IMR-90 (cell line): ENCODE measurements at regions of chr5 and their contacts with region 1.

Region 1: GRCh38 chr5:135332519-135333150 is 66.4 kb downstream of the MACROH2A1 start:
- DNase-seq: peak; percentile 77
- ATAC-seq: peak; percentile 42
- H3K4me3 ChIP-seq: no peak overlapping the region
- H3K27ac ChIP-seq: no peak overlapping the region
- H3K4me1 ChIP-seq: peaks cover 31% of the 10 kb centered on the region
- H3K27me3 ChIP-seq: no peaks in the 10 kb centered on the region
- CTCF ChIP-seq: peak; percentile 69
- POLR2A ChIP-seq: no peak
- RAD21 ChIP-seq: peak; percentile 92

Region 2: DNA sequence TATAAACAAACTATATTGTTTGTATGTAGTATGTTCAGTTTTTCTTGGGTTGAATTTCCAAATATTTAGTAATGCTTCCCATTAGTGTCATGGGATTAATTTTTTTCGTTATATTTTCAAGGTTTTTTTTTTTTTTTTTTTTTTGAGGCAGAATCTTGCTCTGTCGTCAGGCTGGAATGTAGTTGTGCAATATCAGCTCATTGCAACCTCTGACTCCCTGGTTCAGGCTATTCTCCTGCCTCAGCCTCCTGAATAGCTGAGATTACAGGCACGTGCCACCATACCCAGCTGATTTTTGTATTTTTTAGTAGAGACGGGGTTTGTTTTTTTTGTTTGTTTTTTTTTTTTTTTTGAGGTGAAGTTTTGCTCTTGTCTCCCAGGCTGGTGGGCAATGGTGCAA is 563.4 kb before region 1 on chr5:
- CTCF ChIA-PET with region 1: no interaction called
- POLR2A ChIA-PET with region 1: interaction called, 19 read pairs
- dilution Hi-C with region 1: no loop called
- in situ Hi-C with region 1: no loop called
- intact Hi-C with region 1: no loop called
- DNase-seq: peak; percentile 70
- ATAC-seq: peak; percentile 60
- H3K4me3 ChIP-seq: no peak overlapping the region
- H3K27ac ChIP-seq: no peak overlapping the region
- H3K4me1 ChIP-seq: no peaks in the 10 kb centered on the region
- H3K27me3 ChIP-seq: no peaks in the 10 kb centered on the region
- CTCF ChIP-seq: no peak
- POLR2A ChIP-seq: no peak
- RAD21 ChIP-seq: no peak

Region 3: GRCh38 chr5:135013947-135014570 is 318.6 kb before region 1 on chr5:
- CTCF ChIA-PET with region 1: no interaction called
- POLR2A ChIA-PET with region 1: no interaction called
- dilution Hi-C with region 1: no loop called
- in situ Hi-C with region 1: loop called (anchors 10 kb)
- intact Hi-C with region 1: no loop called
- DNase-seq: peak; percentile 58
- ATAC-seq: peak; percentile 76
- H3K4me3 ChIP-seq: no peak overlapping the region
- H3K27ac ChIP-seq: no peak overlapping the region; the same call in 1 of the 2 replicates
- H3K4me1 ChIP-seq: peaks cover 7% of the 10 kb centered on the region; the same call in 1 of the 2 replicates
- H3K27me3 ChIP-seq: no peaks in the 10 kb centered on the region
- CTCF ChIP-seq: no peak
- POLR2A ChIP-seq: no peak
- RAD21 ChIP-seq: no peak

Region 4: DNA sequence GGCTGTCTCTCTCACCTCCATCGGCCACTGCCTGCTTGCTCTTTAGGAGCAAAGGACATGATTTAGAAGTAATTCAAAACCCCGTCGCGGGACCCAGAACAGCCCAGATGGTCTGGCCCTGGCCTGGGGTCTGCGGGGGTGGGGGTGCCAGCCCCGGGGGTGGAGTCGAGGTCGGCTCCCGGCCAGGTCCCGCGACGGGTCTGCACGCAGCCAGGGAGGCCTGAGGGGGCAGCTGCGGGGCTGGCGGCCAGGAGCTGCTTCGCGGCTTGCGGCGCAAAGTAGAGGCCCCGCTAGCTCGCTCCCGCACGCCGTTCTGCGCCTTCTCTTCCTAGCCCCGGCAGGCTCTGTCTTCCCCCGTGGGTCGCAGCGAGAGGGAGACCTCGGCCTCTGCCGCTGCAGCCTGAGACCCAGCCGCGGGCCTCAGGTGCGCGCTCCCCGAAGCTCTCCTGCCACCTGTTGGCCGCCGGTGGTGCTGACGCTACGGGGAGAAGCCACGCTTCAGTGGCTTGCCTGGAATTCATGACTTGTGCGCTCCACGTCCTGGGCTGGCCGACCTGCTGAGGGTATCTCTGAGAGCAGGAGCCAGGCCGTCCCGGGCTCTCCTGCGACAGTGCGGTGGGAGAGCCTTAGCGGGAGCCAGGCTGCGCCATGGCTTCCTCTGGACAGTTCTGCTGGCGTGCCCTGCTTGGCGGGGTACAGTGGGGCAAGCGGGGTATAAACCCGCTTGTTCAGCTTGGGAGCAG is 141.4 kb before region 1 on chr5:
- CTCF ChIA-PET with region 1: no interaction called
- POLR2A ChIA-PET with region 1: no interaction called
- dilution Hi-C with region 1: no loop called
- in situ Hi-C with region 1: loop called (anchors 5 kb)
- intact Hi-C with region 1: loop called (anchors 5 kb)
- DNase-seq: peak; percentile 68
- ATAC-seq: peak; percentile 77
- H3K4me3 ChIP-seq: no peak overlapping the region
- H3K27ac ChIP-seq: no peak overlapping the region
- H3K4me1 ChIP-seq: peaks cover 19% of the 10 kb centered on the region
- H3K27me3 ChIP-seq: no peaks in the 10 kb centered on the region
- CTCF ChIP-seq: peak; percentile 89
- POLR2A ChIP-seq: no peak
- RAD21 ChIP-seq: peak; percentile 90

Region 5: GRCh38 chr5:135263022-135263668 is 69.5 kb before region 1 on chr5:
- CTCF ChIA-PET with region 1: interaction called, 3 read pairs
- POLR2A ChIA-PET with region 1: no interaction called
- dilution Hi-C with region 1: no loop called
- in situ Hi-C with region 1: no loop called
- intact Hi-C with region 1: loop called (anchors 2 kb)
- DNase-seq: no peak
- ATAC-seq: no peak
- H3K4me3 ChIP-seq: no peak overlapping the region
- H3K27ac ChIP-seq: peak overlapping the region; percentile 3; the same call in 1 of the 2 replicates
- H3K4me1 ChIP-seq: peaks cover 26% of the 10 kb centered on the region
- H3K27me3 ChIP-seq: no peaks in the 10 kb centered on the region
- CTCF ChIP-seq: no peak
- POLR2A ChIP-seq: no peak
- RAD21 ChIP-seq: no peak

Region 6: GRCh38 chr5:135386886-135387628 is 54.4 kb after region 1 on chr5:
- CTCF ChIA-PET with region 1: no interaction called
- POLR2A ChIA-PET with region 1: no interaction called
- dilution Hi-C with region 1: no loop called
- in situ Hi-C with region 1: no loop called
- intact Hi-C with region 1: no loop called
- DNase-seq: peak; percentile 94
- ATAC-seq: peak; percentile 21
- H3K4me3 ChIP-seq: no peak overlapping the region
- H3K27ac ChIP-seq: peak overlapping the region; percentile 23; the same call in 1 of the 2 replicates
- H3K4me1 ChIP-seq: peaks cover 40% of the 10 kb centered on the region
- H3K27me3 ChIP-seq: no peaks in the 10 kb centered on the region
- CTCF ChIP-seq: no peak
- POLR2A ChIP-seq: no peak
- RAD21 ChIP-seq: no peak